ENCODE measurements at regions of chr21 and their contacts with region 1.

Region 1: GRCh38 chr21:26961698-26962097 is 5.2 kb downstream of the ADAMTS5 start:
- DNase-seq: peak; percentile 24
- H3K4me3 ChIP-seq: no peak overlapping the region
- H3K27ac ChIP-seq: no peak overlapping the region
- H3K4me1 ChIP-seq: peaks cover 0 to 6% of the 10 kb centered on the region in 2 experiments; a peak in 1 of 4 replicates
- H3K27me3 ChIP-seq: no peaks in the 10 kb centered on the region
- CTCF ChIP-seq: peak; percentile 39
- EP300 ChIP-seq: no peak
- RAD21 ChIP-seq: peak; percentile 14; the same call in 1 of the 2 replicates

Region 2: GRCh38 chr21:26834181-26834945 is 127.3 kb before region 1 on chr21:
- CTCF ChIA-PET with region 1: no interaction called
- POLR2A ChIA-PET with region 1: no interaction called
- DNase-seq: no peak
- H3K4me3 ChIP-seq: no peak overlapping the region
- H3K27ac ChIP-seq: peak overlapping the region in 1 of 2 experiments; percentile 52; a peak in 1 of 4 replicates
- H3K4me1 ChIP-seq: peaks cover 0 to 11% of the 10 kb centered on the region in 2 experiments; a peak in 3 of 4 replicates
- H3K27me3 ChIP-seq: no peaks in the 10 kb centered on the region
- CTCF ChIP-seq: peak; percentile 56
- EP300 ChIP-seq: no peak
- RAD21 ChIP-seq: no peak

Region 3: DNA sequence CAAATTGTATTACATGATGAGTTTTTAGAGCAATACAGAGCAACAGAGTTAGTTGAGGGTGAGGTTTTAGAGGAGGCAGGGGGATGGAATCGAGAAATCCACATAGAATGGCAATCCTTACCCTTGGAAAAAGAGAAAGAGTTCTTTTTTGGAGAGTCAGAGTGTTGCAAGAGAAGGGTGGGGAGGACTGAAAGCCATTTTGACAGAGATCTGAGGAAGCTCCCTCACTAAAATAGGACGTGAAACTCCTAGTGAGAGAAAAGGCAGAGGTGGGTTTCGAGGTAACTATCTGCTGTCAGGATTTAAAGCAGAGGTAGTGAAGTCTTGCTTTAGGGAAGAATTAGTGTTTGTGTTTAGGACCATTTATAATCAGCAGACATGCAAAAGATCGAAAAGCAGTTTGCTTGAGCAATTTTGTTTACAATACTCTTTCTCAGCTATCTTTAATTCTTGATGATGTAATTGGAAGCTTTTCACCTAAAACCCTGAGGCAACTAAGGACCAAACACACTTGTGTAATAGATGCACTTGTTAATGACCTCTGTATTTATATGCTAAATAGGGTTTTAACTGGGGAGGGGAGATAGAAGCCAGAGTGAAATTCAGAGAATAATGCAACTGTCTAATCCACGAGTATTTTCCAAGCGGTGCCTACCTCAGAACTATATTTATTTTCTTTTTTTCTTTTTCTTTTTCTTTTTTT is 14.8 kb before region 1 on chr21:
- CTCF ChIA-PET with region 1: interaction called, 10 read pairs
- POLR2A ChIA-PET with region 1: no interaction called
- DNase-seq: no peak
- H3K4me3 ChIP-seq: no peak overlapping the region
- H3K27ac ChIP-seq: no peak overlapping the region
- H3K4me1 ChIP-seq: peaks cover 0 to 3% of the 10 kb centered on the region in 2 experiments; a peak in 2 of 4 replicates
- H3K27me3 ChIP-seq: no peaks in the 10 kb centered on the region
- CTCF ChIP-seq: no peak
- EP300 ChIP-seq: no peak
- RAD21 ChIP-seq: no peak

Measured in SK-N-SH (cell line).